PC-9 (cell line): ENCODE measurements at regions of chr1 and their contacts with region 1.

Region 1: DNA sequence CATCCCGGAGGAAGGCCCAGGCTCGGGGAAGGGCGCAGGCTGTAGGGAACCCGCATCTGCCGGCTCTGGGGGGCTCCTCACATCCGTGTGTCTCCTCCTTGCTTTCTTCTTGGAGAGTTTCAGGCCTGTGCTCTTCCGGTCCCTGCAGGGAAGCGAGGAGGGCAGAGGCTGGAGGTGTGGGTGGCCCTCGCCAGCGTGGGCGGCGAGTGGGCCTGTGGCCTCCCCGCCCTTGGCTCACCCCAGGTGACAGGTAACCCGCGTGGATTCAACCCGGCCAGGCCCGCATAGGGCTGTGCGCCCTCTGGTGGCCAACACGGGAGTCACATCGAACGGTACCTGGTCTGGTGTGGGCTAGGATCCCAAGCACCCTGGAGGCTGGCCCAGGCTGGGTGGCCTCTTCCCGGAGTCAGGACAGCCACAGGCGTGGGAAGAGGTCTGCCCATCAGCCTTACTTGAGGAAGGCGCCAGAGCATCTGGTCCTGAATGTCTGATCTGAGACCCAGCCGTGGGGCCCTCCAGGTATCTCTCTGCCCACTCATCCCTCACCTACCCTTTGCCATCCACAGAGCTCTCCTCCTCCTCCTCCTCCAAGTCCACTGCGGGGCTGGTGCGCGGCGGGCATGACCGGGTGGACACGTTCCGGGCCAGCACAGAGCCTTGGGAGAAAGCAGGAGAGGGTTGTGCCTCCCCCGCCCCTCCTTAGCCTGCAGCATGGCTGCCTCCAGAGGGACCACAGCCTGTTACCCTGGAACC is 9.6 kb upstream of the TNFRSF25 start:
- DNase-seq: peak in 1 of 2 experiments; percentile 55
- H3K4me3 ChIP-seq: no peak overlapping the region
- H3K27ac ChIP-seq: no peak overlapping the region
- H3K4me1 ChIP-seq: peaks cover 11% of the 10 kb centered on the region; the same call in 1 of the 2 replicates
- H3K27me3 ChIP-seq: no peaks in the 10 kb centered on the region
- CTCF ChIP-seq: peak; percentile 88

Region 2: DNA sequence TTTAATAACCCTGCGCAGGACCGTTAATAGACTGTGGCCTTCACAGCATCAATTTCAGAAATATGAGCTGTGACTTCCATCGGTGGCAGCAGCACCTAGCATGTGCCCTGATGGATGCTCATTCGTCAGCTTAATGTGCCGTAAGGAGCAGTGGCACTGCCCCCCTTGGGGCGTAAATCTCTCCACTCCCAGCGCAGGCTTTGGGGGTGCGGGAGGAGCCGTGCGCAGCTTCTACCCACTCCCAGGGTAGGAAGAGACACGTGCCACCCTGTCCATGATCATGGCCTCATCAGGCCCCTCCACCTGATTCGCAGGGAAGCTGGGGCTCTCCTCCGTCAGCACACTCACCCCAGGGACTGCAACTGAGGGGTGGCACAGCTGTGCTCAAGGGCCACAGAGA is 632.9 kb before region 1 on chr1:
- CTCF ChIA-PET with region 1: interaction called, 21 read pairs
- POLR2A ChIA-PET with region 1: no interaction called
- intact Hi-C with region 1: no loop called
- DNase-seq: no peak
- H3K4me3 ChIP-seq: no peak overlapping the region
- H3K27ac ChIP-seq: no peak overlapping the region
- H3K4me1 ChIP-seq: no peaks in the 10 kb centered on the region
- H3K27me3 ChIP-seq: peaks cover 89% of the 10 kb centered on the region
- CTCF ChIP-seq: no peak

Region 3: DNA sequence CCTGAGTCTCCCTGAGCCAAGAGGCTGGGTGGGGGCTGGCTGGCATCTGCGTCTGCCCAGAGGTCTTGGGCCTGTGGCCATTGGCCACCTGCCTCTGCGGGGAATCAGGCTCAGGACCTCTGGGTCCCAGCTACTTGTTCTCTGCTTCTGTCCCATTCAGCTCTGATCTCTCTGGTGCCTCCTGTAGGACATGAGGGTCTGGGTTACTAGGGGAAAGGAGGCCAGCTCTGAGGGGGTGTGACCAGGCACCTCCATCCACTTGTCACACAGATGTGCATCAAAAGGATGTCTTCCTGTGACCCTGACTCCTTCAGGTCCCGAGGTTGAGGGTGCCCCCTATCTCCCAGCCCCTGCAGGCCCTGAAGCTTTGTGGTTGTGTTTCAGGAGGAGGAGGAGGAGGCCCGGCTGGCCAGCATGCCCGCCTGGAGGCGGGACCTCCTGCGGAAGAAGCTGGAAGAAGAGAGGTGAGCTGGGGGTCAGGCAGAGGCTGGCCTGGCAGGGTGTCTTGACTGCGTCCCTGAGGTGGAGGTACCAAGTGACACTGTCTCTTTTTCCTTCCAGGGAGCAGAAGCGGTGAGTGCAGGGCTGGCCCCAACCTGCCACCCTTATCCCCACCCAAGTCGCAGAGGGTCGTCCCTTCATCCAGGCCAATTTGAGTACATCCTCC is 18.6 kb before region 1 on chr1:
- CTCF ChIA-PET with region 1: interaction called, 17 read pairs
- POLR2A ChIA-PET with region 1: no interaction called
- intact Hi-C with region 1: no loop called
- DNase-seq: no peak
- H3K4me3 ChIP-seq: no peak overlapping the region
- H3K27ac ChIP-seq: no peak overlapping the region
- H3K4me1 ChIP-seq: no peaks in the 10 kb centered on the region
- H3K27me3 ChIP-seq: no peaks in the 10 kb centered on the region
- CTCF ChIP-seq: no peak

Region 4: GRCh38 chr1:6489799-6490180 is 14.2 kb after region 1 on chr1:
- CTCF ChIA-PET with region 1: no interaction called
- POLR2A ChIA-PET with region 1: no interaction called
- intact Hi-C with region 1: no loop called
- DNase-seq: peak in 1 of 2 experiments; percentile 79
- H3K4me3 ChIP-seq: peak overlapping the region; percentile 89
- H3K27ac ChIP-seq: peak overlapping the region; percentile 89; the same call in 1 of the 2 replicates
- H3K4me1 ChIP-seq: peaks cover 19% of the 10 kb centered on the region
- H3K27me3 ChIP-seq: no peaks in the 10 kb centered on the region
- CTCF ChIP-seq: peak; percentile 91